Mammary epithelial cell (primary cell): ENCODE measurements at regions of chr18 and their contacts with region 1.

Region 1: GRCh38 chr18:45722899-45723298 is 1.1 kb upstream of the SLC14A1 start:
- DNase-seq: peak; percentile 57
- H3K4me3 ChIP-seq: no peak overlapping the region
- H3K27ac ChIP-seq: no peak overlapping the region
- H3K4me1 ChIP-seq: peaks cover 3% of the 10 kb centered on the region
- H3K27me3 ChIP-seq: no peaks in the 10 kb centered on the region
- CTCF ChIP-seq: peak; percentile 81 to 94

Region 2: GRCh38 chr18:45793306-45793965 is 70.5 kb after region 1 on chr18:
- CTCF ChIA-PET with region 1: no interaction called
- dilution Hi-C with region 1: no loop called
- in situ Hi-C with region 1: no loop called
- intact Hi-C with region 1: loop called (anchors 1 kb)
- DNase-seq: peak; percentile 99
- H3K4me3 ChIP-seq: no peak overlapping the region
- H3K27ac ChIP-seq: peak overlapping the region; percentile 80
- H3K4me1 ChIP-seq: peaks cover 16% of the 10 kb centered on the region
- H3K27me3 ChIP-seq: no peaks in the 10 kb centered on the region
- CTCF ChIP-seq: no peak

Region 3: DNA sequence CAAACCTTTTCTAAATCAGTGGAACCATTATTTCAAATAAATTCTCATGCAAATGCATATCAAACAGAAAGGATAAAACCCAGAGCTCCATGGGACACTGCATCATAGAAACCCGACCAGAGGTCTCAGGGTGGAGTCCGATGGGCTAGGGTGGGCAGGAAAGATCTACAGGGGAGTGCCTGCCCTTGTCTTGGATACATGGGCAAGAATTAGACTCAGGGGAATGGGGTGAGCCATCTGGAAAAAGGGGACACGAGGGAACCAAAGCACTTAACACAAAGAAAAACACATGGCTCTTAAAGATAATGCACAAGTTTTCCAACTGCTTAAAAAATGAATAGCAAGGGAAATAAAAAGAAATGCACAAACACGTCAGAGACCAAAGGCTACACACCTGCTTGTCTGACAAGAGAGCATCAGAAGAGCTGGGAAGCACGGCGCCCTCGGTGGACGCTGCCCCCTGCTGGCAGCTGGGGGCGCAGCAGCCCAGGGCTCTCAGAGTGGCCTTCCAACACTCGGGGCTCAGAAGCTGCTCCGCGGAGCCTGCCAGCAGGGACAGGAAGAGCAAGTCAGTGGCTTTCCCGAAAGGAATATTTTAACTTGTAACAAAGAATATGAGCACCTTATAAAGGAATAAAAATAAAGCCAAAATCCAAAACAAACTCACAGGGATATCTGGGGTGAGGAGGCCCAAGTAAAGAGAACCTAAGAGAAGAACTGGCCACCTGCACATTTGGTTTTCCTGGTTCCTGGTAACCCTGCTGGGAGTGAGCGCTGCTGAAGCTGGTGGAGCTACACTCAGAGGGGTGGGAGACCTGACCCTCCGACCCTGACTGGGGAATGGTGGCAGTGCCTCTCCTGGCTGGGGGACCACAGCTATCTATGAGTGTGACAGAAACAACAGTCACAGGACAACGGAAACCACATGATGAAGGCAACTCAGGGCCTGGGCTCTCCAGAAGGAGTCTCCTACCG is 157.1 kb after region 1 on chr18:
- CTCF ChIA-PET with region 1: interaction called, 4 read pairs
- dilution Hi-C with region 1: no loop called
- in situ Hi-C with region 1: no loop called
- intact Hi-C with region 1: loop called (anchors 1 kb)
- DNase-seq: peak; percentile 50
- H3K4me3 ChIP-seq: no peak overlapping the region
- H3K27ac ChIP-seq: no peak overlapping the region
- H3K4me1 ChIP-seq: no peaks in the 10 kb centered on the region
- H3K27me3 ChIP-seq: no peaks in the 10 kb centered on the region
- CTCF ChIP-seq: peak; percentile 99